ENCODE measurements at regions of chr5 and their contacts with region 1.

Region 1: GRCh38 chr5:141430332-141431113 is at the start of gene PCDHGA12:
- DNase-seq: peak; percentile 87
- H3K4me3 ChIP-seq: peak within 1 kb of the TSS; percentile 30 to 67 (median 40)
- H3K27ac ChIP-seq: peak within 1 kb of the TSS; percentile 10
- H3K4me1 ChIP-seq: peaks cover 17% of the 10 kb centered on the region
- H3K27me3 ChIP-seq: peaks cover 25 to 48% of the 10 kb centered on the region in 2 experiments
- CTCF ChIP-seq: peak; percentile 45 to 69
- POLR2A ChIP-seq: no peak
- total RNA-seq, gene PCDHGA12: 7.6 and 9.9 TPM in 2 replicates

Region 2: DNA sequence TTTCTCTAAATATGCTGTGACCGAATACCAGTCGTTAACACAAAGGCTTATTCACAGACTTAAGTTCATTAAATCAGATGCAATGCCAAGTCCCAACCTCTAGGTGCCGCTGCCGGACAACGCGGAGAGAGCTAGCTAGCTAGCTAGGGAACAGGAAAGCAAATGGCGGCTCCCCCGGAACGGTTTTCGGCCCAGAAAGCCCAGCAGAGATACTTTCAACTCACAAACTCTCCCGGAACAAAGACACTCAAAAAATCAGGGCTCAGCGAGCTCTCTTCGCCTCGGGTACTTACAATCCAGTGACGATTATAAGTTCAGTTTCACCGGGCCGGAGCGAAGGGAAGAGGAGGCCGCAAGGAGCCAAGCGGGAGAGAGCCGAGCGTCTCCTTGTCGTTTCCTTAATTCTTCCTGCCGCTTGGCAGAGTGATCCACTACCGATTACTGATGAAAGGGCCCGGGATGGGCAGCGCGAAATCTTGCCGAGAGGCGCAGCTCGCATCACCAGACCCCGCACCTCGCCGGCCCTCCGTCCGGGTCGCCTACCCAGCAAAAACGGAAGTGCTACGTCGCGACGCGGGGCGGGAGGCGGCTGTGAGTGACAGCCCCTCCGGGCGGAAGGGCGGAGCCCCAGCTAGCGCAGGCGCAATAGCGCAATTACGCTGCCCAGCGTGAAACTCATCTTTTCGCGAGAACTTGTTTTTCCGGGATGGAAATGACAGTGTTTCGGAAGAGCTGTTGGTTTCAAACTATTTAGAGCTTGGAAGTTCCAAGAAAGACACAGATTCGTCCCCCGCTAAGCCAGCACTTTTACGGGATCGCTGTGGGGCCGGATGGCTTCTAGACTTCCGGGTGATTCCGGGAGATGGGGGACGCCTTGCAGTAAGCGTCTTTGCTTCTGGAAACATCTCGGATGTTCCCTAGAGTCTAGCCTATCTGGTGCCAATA is 110.0 kb before region 1 on chr5 and contains the start of gene TAF7:
- CTCF ChIA-PET with region 1: interaction called, 12 read pairs
- POLR2A ChIA-PET with region 1: no interaction called
- dilution Hi-C with region 1: no loop called
- intact Hi-C with region 1: no loop called
- DNase-seq: peak; percentile 91
- H3K4me3 ChIP-seq: peak within 1 kb of the TSS; percentile 56 to 91 (median 87)
- H3K27ac ChIP-seq: peak within 1 kb of the TSS; percentile 91
- H3K4me1 ChIP-seq: no peaks in the 10 kb centered on the region
- H3K27me3 ChIP-seq: no peaks in the 10 kb centered on the region
- CTCF ChIP-seq: peak; percentile 78 to 88
- POLR2A ChIP-seq: peak; percentile 94
- total RNA-seq, gene TAF7: 55.0 and 62.0 TPM in 2 replicates

Region 3: DNA sequence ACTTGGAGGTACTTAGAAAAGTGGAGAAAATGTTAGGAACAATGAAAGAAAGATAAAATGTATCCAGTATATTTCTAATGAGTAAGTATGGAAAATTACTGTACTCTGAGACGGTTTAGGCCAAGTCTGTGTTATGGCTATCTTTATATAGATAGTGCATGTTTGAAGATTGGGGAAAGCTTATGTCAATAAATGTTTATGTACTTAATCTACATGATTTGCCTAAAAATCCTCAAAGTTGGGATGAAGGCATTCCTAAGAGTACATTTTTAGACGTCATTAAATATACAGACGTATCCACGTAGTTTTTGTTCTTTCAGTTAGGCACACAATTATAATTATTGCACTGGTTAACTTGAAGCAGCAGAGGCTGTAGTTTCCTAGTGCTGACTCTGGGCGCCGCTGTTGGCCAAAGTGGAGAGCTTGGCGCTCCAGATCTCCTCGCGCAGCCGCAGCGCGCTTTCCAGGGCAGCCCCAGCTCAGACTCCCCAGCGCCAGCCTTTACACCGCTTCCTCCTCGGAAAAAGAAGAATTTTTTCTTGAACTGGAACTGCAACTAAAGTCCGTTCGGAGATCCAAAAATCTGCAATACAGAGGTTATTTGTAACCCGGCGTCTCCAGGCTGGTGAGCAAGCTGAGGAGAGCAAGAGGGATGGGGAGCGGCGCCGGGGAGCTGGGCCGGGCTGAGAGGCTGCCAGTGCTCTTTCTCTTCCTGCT is 43.1 kb before region 1 on chr5 and contains the start of gene PCDHGB4:
- CTCF ChIA-PET with region 1: interaction called, 14 read pairs
- POLR2A ChIA-PET with region 1: no interaction called
- dilution Hi-C with region 1: no loop called
- intact Hi-C with region 1: no loop called
- DNase-seq: peak; percentile 30
- H3K4me3 ChIP-seq: peak within 1 kb of the TSS in 2 of 3 experiments; percentile 9 to 22
- H3K27ac ChIP-seq: no peak within 1 kb of the TSS
- H3K4me1 ChIP-seq: no peaks in the 10 kb centered on the region
- H3K27me3 ChIP-seq: peaks cover 35 to 78% of the 10 kb centered on the region in 2 experiments
- CTCF ChIP-seq: peak; percentile 46 to 51
- POLR2A ChIP-seq: no peak
- total RNA-seq, gene PCDHGB4: 4.4 and 6.5 TPM in 2 replicates

Region 4: GRCh38 chr5:141475625-141476131 is 45.2 kb after region 1 on chr5 and contains the start of gene PCDHGC3:
- CTCF ChIA-PET with region 1: interaction called, 64 read pairs
- POLR2A ChIA-PET with region 1: no interaction called
- dilution Hi-C with region 1: no loop called
- intact Hi-C with region 1: loop called (anchors 1 kb)
- DNase-seq: peak; percentile 96
- H3K4me3 ChIP-seq: peak within 1 kb of the TSS; percentile 32 to 70 (median 50)
- H3K27ac ChIP-seq: no peak within 1 kb of the TSS
- H3K4me1 ChIP-seq: peaks cover 7% of the 10 kb centered on the region
- H3K27me3 ChIP-seq: peaks cover 0 to 5% of the 10 kb centered on the region in 2 experiments
- CTCF ChIP-seq: peak in 1 of 2 donors; percentile 8
- POLR2A ChIP-seq: no peak
- total RNA-seq, gene PCDHGC3: 25.4 and 36.1 TPM in 2 replicates

Region 5: GRCh38 chr5:141512390-141512910 is 81.9 kb after region 1 on chr5:
- CTCF ChIA-PET with region 1: interaction called, 158 read pairs
- POLR2A ChIA-PET with region 1: interaction called, 5 read pairs
- dilution Hi-C with region 1: no loop called
- intact Hi-C with region 1: loop called (anchors 1 kb)
- DNase-seq: peak; percentile 76
- H3K4me3 ChIP-seq: peak overlapping the region; percentile 44 to 51 (median 49)
- H3K27ac ChIP-seq: peak overlapping the region; percentile 19
- H3K4me1 ChIP-seq: peaks cover 31% of the 10 kb centered on the region
- H3K27me3 ChIP-seq: no peaks in the 10 kb centered on the region
- CTCF ChIP-seq: peak; percentile 89 to 94
- POLR2A ChIP-seq: no peak

Region 6: DNA sequence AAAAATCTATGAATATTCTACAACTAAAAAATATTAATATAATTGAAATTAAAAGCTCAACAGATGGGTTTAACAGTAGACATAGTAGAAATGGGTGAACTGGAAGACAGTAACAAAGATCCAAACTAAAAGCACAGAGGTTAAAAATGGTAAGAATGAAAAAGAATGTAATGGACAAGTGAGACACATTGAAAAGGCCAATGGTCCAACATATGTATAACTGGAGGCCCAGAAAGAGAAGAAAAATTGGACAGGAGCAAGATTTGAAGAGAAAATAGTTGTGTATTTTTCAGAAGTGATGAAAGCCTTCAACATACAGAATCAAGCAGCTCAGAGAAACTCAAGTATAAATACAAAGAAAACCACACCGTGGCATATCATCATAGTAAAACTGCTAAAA is 117.0 kb after region 1 on chr5:
- CTCF ChIA-PET with region 1: interaction called, 10 read pairs
- POLR2A ChIA-PET with region 1: no interaction called
- dilution Hi-C with region 1: no loop called
- intact Hi-C with region 1: no loop called
- DNase-seq: no peak
- H3K4me3 ChIP-seq: no peak overlapping the region
- H3K27ac ChIP-seq: no peak overlapping the region
- H3K4me1 ChIP-seq: no peaks in the 10 kb centered on the region
- H3K27me3 ChIP-seq: no peaks in the 10 kb centered on the region
- CTCF ChIP-seq: no peak
- POLR2A ChIP-seq: no peak

Region 7: GRCh38 chr5:141778206-141778605 is 347.7 kb after region 1 on chr5:
- CTCF ChIA-PET with region 1: no interaction called
- POLR2A ChIA-PET with region 1: no interaction called
- dilution Hi-C with region 1: no loop called
- intact Hi-C with region 1: no loop called
- DNase-seq: no peak
- H3K4me3 ChIP-seq: no peak overlapping the region
- H3K27ac ChIP-seq: no peak overlapping the region
- H3K4me1 ChIP-seq: no peaks in the 10 kb centered on the region
- H3K27me3 ChIP-seq: peaks cover 2 to 3% of the 10 kb centered on the region in 2 experiments
- CTCF ChIP-seq: no peak
- POLR2A ChIP-seq: no peak

Measured in endothelial cell of umbilical vein (primary cell).